Activated CD8-positive, alpha-beta memory T cell treated with anti-CD3 and anti-CD28 coated beads, Interleukin-2, amount 10 ng/mL, durations not matched to agents 7 days and 5 days (primary cell): ENCODE measurements at regions of chr9 and their contacts with region 1.

Region 1: DNA sequence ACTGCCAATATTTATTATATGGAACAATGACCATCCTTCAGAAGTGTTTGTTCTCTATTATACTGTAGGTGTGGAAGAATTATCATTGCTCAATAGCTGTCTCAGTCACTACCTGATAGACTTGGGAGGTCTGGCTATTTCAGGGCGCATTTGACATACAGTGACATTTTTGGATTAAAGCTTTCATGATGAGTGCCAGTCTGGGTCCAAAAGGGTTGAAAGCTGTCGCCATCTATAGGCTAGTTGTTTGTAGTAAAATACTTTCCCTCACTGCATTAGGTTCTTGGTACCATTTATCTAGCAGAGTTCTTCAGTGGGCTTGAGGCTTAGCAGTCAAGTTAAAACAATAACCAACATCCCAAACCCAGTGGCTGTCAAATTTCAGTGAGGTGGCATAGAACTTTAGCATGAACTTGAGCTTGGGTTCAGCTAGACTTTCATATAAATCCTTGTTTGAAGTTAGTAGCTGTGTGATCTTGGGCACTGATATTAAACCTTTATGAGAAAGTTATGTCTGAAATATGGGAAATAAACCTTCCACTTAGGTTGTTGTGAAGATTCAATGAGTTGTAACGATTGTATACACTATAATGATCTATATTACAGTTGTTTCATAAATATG is 110.5 kb upstream of the CDKN2B start:
- DNase-seq: peak; percentile 43
- ATAC-seq: peak; percentile 93
- H3K4me3 Mint-ChIP-seq: no peak overlapping the region
- H3K27ac Mint-ChIP-seq: no peak overlapping the region
- H3K4me1 Mint-ChIP-seq: peaks cover 13% of the 10 kb centered on the region
- H3K27me3 Mint-ChIP-seq: peaks cover 66% of the 10 kb centered on the region

Region 2: DNA sequence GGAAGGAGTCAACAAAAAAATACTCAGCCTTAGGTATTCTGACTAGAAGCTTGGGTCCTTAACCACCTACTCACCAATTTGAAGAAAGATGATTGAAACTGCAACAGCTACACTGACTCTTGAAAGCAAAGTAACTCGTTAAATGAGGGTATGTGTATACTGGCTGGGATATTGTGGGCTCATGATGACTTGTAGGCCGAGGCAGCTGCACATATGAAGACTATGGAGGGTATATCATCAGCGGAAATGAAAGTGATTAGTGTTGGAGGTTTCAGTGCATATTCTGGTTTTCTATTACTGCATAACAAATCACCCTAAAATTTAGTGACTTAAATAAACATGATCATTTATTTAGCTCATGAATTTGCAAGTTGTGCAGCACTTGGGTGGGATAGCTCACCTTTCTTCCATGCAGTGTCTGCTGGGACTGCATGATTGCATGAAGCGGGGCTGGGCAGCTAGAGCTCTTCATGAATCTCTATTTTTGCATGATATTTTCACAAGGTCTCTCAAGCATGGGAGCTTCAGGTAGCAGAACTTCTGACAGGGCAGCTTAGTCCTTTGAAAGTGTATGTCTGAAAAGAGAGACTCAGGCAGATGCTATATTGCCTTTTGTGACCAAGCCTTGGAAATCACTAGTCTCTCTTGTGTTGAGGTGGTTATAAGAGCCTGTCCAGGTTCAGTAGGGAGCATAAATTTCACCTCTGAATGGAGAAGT is 14.5 kb before region 1 on chr9:
- CTCF ChIA-PET with region 1: interaction called, 16 read pairs
- DNase-seq: peak; percentile 65
- ATAC-seq: peak; percentile 96
- H3K4me3 Mint-ChIP-seq: no peak overlapping the region
- H3K27ac Mint-ChIP-seq: peak overlapping the region; percentile 65
- H3K4me1 Mint-ChIP-seq: peaks cover 44% of the 10 kb centered on the region
- H3K27me3 Mint-ChIP-seq: peaks cover 55% of the 10 kb centered on the region